IMR-90 (cell line): ENCODE measurements at regions of chr6 and their contacts with region 1.

Region 1: DNA sequence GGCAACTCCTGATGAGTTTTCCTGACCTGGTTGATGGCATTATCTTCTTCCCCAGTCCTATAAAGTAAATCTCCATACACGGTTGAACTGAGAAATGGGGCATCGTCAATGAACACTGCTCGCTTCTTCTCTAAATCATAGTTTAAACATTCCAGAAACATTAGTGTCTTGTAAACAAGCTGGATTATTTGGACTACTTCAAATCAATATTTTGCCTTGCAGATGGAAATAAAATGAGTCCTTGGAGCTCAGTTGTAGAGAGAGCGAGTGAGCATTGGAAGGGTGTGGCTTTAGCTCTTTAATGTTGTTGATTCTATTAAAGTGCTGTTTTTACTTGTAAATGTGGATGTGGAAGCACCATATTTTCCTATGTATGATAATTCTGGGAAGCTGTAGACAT is 18.4 kb downstream of the C6orf89 start:
- DNase-seq: peak; percentile 65
- ATAC-seq: peak; percentile 89
- H3K4me3 ChIP-seq: no peak overlapping the region; the same call in 1 of the 2 replicates
- H3K27ac ChIP-seq: peak overlapping the region; percentile 82
- H3K4me1 ChIP-seq: peaks cover 11% of the 10 kb centered on the region
- H3K27me3 ChIP-seq: no peaks in the 10 kb centered on the region
- CTCF ChIP-seq: no peak
- POLR2A ChIP-seq: no peak
- RAD21 ChIP-seq: no peak

Region 2: DNA sequence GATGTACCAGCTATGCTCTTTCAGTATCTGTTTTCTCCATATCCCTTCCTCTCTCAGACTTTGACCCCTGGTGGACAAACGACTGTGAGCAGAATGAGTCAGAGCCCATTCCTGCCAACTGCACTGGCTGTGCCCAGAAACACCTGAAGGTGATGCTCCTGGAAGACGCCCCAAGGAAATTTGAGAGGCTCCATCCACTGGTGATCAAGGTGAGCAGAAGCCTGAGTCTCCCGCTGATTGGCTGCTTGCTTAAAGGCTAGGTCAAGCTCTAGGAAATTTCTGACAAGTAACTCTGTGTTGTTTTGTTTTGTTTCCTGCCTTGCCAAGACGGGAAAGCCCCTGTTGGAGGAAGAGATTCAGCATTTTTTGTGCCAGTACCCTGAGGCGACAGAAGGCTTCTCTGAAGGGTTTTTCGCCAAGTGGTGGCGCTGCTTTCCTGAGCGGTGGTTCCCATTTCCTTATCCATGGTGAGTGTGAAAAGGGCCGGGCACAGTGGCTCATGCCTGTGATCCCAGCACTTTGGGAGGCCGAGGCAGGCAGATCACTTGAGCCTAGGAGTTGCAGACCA is 10.2 kb after region 1 on chr6:
- CTCF ChIA-PET with region 1: interaction called, 19 read pairs
- POLR2A ChIA-PET with region 1: interaction called, 6 read pairs
- dilution Hi-C with region 1: no loop called
- in situ Hi-C with region 1: no loop called
- intact Hi-C with region 1: no loop called
- DNase-seq: peak; percentile 56
- ATAC-seq: 0 out of 2 replicates have a peak, but pooled peaks have one; percentile 11
- H3K4me3 ChIP-seq: no peak overlapping the region
- H3K27ac ChIP-seq: no peak overlapping the region
- H3K4me1 ChIP-seq: peaks cover 26% of the 10 kb centered on the region
- H3K27me3 ChIP-seq: no peaks in the 10 kb centered on the region
- CTCF ChIP-seq: peak; percentile 31; the same call in 1 of the 2 replicates
- POLR2A ChIP-seq: no peak
- RAD21 ChIP-seq: peak; percentile 30

Region 3: GRCh38 chr6:37038292-37039198 is 134.4 kb after region 1 on chr6:
- CTCF ChIA-PET with region 1: no interaction called
- POLR2A ChIA-PET with region 1: no interaction called
- dilution Hi-C with region 1: no loop called
- in situ Hi-C with region 1: no loop called
- intact Hi-C with region 1: no loop called
- DNase-seq: peak; percentile 28
- ATAC-seq: no peak
- H3K4me3 ChIP-seq: no peak overlapping the region
- H3K27ac ChIP-seq: no peak overlapping the region
- H3K4me1 ChIP-seq: no peaks in the 10 kb centered on the region; the same call in 1 of the 2 replicates
- H3K27me3 ChIP-seq: peaks cover 8% of the 10 kb centered on the region
- CTCF ChIP-seq: no peak
- POLR2A ChIP-seq: no peak
- RAD21 ChIP-seq: no peak

Region 4: DNA sequence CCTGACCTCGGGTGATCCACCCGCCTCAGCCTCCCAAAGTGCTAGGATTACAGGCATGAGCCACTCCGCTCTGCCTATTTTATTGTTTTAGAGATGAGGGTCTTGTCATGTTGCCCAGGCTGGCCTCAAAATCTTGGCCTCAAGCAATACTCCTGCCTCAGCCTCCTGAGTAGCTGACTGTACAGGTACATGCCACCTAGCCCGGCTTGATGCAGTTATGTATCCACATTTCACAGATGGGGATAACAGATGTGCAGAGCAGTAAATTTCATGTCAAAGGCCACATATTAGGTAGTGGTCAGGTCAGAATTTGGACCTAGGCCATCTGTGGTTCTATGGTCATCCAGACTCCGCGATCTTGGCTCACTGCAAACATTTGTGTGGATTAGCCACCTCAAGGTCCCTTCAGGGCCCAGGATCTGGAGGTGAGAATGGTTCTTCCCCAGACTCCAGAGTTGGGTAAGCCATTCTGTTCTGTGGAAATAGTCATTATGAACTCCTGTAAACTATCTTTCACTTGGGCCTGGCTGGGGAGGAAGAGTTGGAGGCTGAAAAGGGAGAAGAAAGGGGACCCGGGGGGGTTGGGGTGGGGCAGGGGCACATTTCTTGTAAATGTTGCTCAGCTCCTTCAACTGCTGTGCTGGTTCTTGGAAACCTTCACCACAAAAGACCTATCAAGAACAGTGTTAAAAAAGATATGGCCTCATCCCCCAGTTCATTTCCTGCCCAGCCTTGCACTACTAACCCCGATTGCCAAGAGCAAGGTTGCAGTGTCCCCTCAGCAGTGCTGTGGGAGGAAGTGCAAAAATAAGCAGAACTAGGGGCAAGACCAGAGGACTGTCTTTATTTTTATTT is 278.8 kb after region 1 on chr6:
- CTCF ChIA-PET with region 1: no interaction called
- POLR2A ChIA-PET with region 1: no interaction called
- dilution Hi-C with region 1: no loop called
- in situ Hi-C with region 1: no loop called
- intact Hi-C with region 1: no loop called
- DNase-seq: no peak
- ATAC-seq: no peak
- H3K4me3 ChIP-seq: no peak overlapping the region
- H3K27ac ChIP-seq: no peak overlapping the region
- H3K4me1 ChIP-seq: no peaks in the 10 kb centered on the region
- H3K27me3 ChIP-seq: no peaks in the 10 kb centered on the region
- CTCF ChIP-seq: no peak
- POLR2A ChIP-seq: no peak
- RAD21 ChIP-seq: no peak